Mammary epithelial cell (primary cell): ENCODE measurements at regions of chr10 and their contacts with region 1.

Region 1: GRCh38 chr10:119290291-119291048 is 83.1 kb downstream of the GRK5 start:
- DNase-seq: no peak
- H3K4me3 ChIP-seq: no peak overlapping the region
- H3K27ac ChIP-seq: no peak overlapping the region
- H3K4me1 ChIP-seq: peaks cover 7% of the 10 kb centered on the region
- H3K27me3 ChIP-seq: no peaks in the 10 kb centered on the region
- CTCF ChIP-seq: peak in 1 of 2 donors; percentile 38

Region 2: GRCh38 chr10:119222537-119222936 is 67.9 kb before region 1 on chr10:
- CTCF ChIA-PET with region 1: no interaction called
- dilution Hi-C with region 1: loop called (anchors 5 kb)
- in situ Hi-C with region 1: no loop called
- intact Hi-C with region 1: no loop called
- DNase-seq: no peak
- H3K4me3 ChIP-seq: no peak overlapping the region
- H3K27ac ChIP-seq: no peak overlapping the region
- H3K4me1 ChIP-seq: no peaks in the 10 kb centered on the region
- H3K27me3 ChIP-seq: no peaks in the 10 kb centered on the region
- CTCF ChIP-seq: no peak

Region 3: DNA sequence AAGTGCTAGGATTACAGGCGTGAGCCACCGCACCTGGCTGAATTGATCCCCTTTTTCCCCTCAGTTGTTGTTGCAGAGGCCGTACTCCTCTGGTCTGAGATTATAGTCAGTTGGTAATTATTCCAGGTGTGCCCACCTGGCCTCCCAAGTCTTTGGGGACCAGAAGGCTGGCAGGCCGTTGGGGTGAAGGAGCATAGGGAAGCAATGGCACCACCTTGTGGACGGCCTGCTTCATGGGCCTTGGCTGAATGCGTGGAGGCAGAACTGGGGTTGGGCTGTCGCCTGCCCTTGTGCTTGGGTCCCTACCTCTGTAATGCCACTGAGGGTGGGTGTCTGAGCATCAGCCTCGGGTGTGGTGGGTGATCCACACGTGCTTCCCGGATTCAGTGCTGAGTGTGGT is 126.4 kb after region 1 on chr10:
- CTCF ChIA-PET with region 1: no interaction called
- dilution Hi-C with region 1: no loop called
- in situ Hi-C with region 1: no loop called
- intact Hi-C with region 1: loop called (anchors 1 kb)
- DNase-seq: peak; percentile 41
- H3K4me3 ChIP-seq: no peak overlapping the region
- H3K27ac ChIP-seq: no peak overlapping the region
- H3K4me1 ChIP-seq: no peaks in the 10 kb centered on the region
- H3K27me3 ChIP-seq: no peaks in the 10 kb centered on the region
- CTCF ChIP-seq: peak; percentile 74 to 91